ENCODE measurements at regions of chr5 and their contacts with region 1.

Region 1: GRCh38 chr5:147098233-147098790 is 136.5 kb upstream of the STK32A start:
- DNase-seq: peak; percentile 23
- H3K4me3 ChIP-seq: no peak overlapping the region
- H3K27ac ChIP-seq: no peak overlapping the region
- H3K4me1 ChIP-seq: no peaks in the 10 kb centered on the region
- H3K27me3 ChIP-seq: no peaks in the 10 kb centered on the region
- CTCF ChIP-seq: peak; percentile 51 to 54
- POLR2A ChIP-seq: no peak

Region 2: GRCh38 chr5:147113967-147114366 is 15.7 kb after region 1 on chr5:
- CTCF ChIA-PET with region 1: interaction called, 10 read pairs
- POLR2A ChIA-PET with region 1: no interaction called
- dilution Hi-C with region 1: no loop called
- intact Hi-C with region 1: no loop called
- DNase-seq: no peak
- H3K4me3 ChIP-seq: no peak overlapping the region
- H3K27ac ChIP-seq: no peak overlapping the region
- H3K4me1 ChIP-seq: no peaks in the 10 kb centered on the region
- H3K27me3 ChIP-seq: no peaks in the 10 kb centered on the region
- CTCF ChIP-seq: no peak
- POLR2A ChIP-seq: no peak

Region 3: DNA sequence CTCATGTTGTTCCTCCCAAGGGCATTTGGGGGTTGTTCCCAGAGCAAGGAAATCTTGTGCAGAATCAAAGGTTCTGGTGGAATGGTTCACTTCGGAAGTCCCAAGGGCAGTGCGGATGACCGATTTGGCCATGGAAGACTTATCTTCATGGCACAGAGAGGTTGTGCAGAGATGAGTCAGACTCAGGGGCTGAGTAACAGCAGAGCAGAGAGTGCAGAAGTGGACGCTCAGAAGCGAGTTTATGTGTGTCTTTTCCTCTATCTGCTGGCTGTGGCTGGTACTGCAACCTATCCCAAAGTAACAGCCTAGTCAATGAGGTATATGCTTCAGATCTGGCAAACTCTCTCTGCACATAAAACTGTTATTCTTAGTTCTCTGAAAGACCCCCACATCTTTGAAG is 293.5 kb after region 1 on chr5:
- CTCF ChIA-PET with region 1: interaction called, 11 read pairs
- POLR2A ChIA-PET with region 1: no interaction called
- dilution Hi-C with region 1: no loop called
- intact Hi-C with region 1: no loop called
- DNase-seq: peak; percentile 80
- H3K4me3 ChIP-seq: no peak overlapping the region
- H3K27ac ChIP-seq: no peak overlapping the region
- H3K4me1 ChIP-seq: peaks cover 12% of the 10 kb centered on the region
- H3K27me3 ChIP-seq: no peaks in the 10 kb centered on the region
- CTCF ChIP-seq: peak; percentile 63 to 73
- POLR2A ChIP-seq: no peak

Measured in endothelial cell of umbilical vein (primary cell).